MCF 10A (cell line): ENCODE measurements at regions of chr1 and their contacts with region 1.

Region 1: DNA sequence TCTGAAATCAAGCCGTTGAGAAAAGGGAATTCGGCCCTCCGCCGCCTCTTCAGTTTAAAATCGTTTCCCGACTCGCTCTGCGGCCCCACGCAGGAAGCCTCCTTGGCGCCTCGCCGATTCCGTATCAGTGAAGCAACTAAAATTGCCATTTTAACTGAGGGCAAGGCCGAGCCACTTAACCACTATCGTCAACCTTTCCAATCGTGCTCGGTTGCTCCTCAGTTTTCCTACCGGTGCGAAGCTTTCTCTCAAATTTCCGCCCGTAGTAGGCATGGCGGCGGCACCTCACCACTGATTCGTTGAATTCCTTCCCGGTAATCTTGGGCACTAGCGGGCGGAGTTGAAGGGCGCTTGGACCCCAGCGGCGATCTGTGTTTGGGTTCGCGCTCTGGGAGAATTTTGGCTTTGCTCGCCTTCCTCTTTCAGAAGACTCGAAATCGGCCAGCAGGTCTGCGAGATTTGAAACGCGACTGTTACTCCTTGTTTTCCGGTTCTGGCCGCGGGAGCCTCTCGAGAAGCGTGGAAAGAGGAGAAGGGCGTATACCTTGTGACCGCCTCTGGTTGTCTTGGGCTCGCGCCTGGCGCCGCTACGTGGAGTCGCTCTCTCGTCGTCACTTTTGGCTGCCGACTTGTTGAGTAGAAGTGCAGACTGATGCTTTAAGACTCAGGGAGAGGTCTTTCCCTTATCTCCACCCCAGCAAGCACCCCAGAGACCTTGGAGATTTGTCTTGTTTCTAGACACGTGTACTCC is at the starts of genes CENPL and DARS2:
- DNase-seq: peak; percentile 100
- H3K4me3 Mint-ChIP-seq: peak within 1 kb of the TSS; percentile 97
- H3K27ac Mint-ChIP-seq: peak within 1 kb of the TSS; percentile 98
- H3K4me1 Mint-ChIP-seq: peaks cover 39% of the 10 kb centered on the region
- H3K27me3 Mint-ChIP-seq: no peaks in the 10 kb centered on the region
- CTCF ChIP-seq: no peak
- total RNA-seq, gene CENPL: 14.1 and 24.5 TPM in 2 replicates
- total RNA-seq, gene DARS2: 34.6 and 40.4 TPM in 2 replicates

Region 2: DNA sequence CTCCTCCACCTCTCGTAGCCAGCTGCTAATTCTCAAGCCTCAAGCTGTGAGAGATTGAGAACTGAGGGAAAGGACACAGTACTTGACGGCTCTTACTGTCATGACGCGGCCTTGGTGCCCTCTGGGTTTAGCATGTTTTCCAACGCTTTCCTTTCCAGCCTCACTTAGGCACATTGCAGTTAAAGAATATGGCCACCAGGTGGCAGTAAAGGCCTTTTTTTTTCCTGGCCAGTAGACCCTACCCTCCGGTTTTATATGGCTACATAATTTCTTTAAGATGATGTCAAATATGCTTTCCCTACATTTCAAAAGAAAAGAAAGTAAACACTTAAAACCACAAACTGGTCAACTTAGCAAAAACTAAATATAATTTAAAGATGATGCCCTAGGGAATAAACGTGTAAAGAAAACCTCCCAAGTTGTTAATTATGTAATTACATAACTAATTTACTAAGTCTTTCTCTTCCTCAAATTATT is 404.1 kb before region 1 on chr1:
- CTCF ChIA-PET with region 1: interaction called, 31 read pairs
- POLR2A ChIA-PET with region 1: interaction called, 5 read pairs
- intact Hi-C with region 1: loop called (anchors 1 kb)
- DNase-seq: peak; percentile 91
- H3K4me3 Mint-ChIP-seq: no peak overlapping the region
- H3K27ac Mint-ChIP-seq: peak overlapping the region; percentile 9
- H3K4me1 Mint-ChIP-seq: peaks cover 22% of the 10 kb centered on the region
- H3K27me3 Mint-ChIP-seq: no peaks in the 10 kb centered on the region
- CTCF ChIP-seq: peak; percentile 94

Region 3: DNA sequence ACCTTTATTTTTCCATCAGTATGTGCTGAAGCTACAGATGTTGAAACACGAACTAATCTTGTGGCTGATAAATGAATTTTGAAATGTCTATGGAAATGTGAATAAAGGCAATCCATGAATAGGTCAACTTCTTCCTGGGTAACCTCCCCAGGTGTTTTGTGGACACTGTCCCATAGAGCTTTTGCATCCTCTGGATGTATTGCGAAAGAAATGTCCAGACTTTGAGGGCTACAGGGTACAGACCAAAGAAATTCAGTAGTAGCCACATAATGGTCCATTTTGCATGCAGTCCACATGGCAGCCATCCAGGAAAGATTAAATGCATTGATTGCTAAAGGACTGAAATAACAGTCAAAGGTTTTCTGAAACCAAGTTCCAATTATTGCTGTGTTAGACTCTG is 21.5 kb before region 1 on chr1:
- CTCF ChIA-PET with region 1: interaction called, 6 read pairs
- POLR2A ChIA-PET with region 1: interaction called, 11 read pairs
- intact Hi-C with region 1: no loop called
- DNase-seq: no peak
- H3K4me3 Mint-ChIP-seq: no peak overlapping the region
- H3K27ac Mint-ChIP-seq: no peak overlapping the region
- H3K4me1 Mint-ChIP-seq: peaks cover 9% of the 10 kb centered on the region
- H3K27me3 Mint-ChIP-seq: no peaks in the 10 kb centered on the region
- CTCF ChIP-seq: no peak

Region 4: DNA sequence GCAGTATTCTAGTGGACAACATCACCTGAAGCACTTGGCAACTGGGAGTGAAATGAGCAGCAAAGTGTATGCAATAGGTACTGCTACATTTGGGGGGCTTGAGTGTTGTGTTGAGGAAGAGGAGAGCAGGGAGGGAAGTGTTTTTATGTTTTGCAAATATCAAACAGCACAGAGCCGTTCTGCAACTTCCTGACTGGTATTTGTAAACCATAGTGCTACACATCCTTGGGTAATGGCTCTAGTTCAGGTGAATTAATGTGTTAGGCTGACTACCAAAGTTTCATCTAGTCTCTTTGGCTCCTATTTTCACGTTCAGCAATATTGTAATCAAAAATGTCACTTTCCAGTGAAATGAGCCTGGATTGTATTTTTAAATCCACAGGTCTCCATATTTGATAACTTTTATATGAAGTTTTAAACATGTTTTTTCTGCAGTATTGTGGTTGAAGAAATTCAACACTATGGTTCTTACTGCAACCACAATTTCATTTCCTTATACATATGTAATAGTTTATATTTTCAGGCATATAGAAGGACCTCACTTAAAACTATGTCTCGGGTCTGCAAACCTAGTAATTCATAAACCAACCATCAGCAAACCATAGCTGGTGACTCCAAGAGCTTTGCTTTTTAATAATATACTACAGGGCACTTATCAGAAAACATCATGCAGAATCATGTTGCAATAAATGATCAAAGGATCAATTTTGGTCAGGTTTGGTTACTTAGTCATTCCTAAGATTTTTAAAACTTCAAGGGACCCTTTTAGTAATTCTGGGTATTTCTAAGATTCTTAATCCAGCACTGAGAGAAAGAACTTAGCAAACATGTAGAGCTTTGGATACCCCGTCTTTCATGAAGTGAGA is 62.5 kb after region 1 on chr1:
- CTCF ChIA-PET with region 1: no interaction called
- POLR2A ChIA-PET with region 1: no interaction called
- intact Hi-C with region 1: no loop called
- DNase-seq: no peak
- H3K4me3 Mint-ChIP-seq: no peak overlapping the region
- H3K27ac Mint-ChIP-seq: no peak overlapping the region
- H3K4me1 Mint-ChIP-seq: no peaks in the 10 kb centered on the region
- H3K27me3 Mint-ChIP-seq: no peaks in the 10 kb centered on the region
- CTCF ChIP-seq: no peak

Region 5: GRCh38 chr1:174276087-174276486 is 451.6 kb after region 1 on chr1:
- CTCF ChIA-PET with region 1: no interaction called
- POLR2A ChIA-PET with region 1: no interaction called
- intact Hi-C with region 1: no loop called
- DNase-seq: no peak
- H3K4me3 Mint-ChIP-seq: no peak overlapping the region
- H3K27ac Mint-ChIP-seq: no peak overlapping the region
- H3K4me1 Mint-ChIP-seq: no peaks in the 10 kb centered on the region
- H3K27me3 Mint-ChIP-seq: no peaks in the 10 kb centered on the region
- CTCF ChIP-seq: no peak